IMR-90 (cell line): ENCODE measurements at regions of chr2 and their contacts with region 1.

Region 1: DNA sequence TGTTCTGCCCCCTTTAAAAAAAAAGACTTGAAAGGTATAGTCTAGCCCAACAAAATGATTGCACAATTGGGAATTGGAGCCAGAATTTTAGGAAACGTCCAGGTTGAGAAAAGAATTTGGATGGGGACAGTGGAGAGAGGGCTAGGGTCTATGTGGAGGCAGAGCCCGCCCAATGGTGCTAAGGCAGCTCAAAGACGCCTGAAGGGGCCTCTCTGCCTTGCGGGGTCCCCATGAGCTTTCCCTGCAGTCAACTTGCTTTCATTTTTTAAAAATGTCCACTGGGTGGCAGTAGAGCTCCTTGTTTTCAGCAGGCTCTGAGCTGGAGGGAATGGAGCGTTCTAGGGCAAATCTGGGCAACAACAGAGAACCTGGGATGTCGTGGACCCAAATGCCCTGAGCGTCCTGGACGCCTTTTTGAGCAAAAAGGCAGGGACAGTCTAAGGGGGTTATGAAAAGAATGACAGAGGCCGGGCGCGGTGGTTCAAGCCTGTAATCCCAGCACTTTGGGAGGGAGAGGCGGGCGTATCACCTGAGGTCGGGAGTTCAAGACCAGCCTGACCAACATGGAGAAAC is 40.2 kb upstream of the ITM2C start:
- DNase-seq: peak; percentile 81
- ATAC-seq: peak; percentile 90
- H3K4me3 ChIP-seq: peak overlapping the region; percentile 46
- H3K27ac ChIP-seq: no peak overlapping the region
- H3K4me1 ChIP-seq: no peaks in the 10 kb centered on the region
- H3K27me3 ChIP-seq: peaks cover 20% of the 10 kb centered on the region
- CTCF ChIP-seq: peak; percentile 69
- POLR2A ChIP-seq: no peak
- RAD21 ChIP-seq: peak; percentile 78

Region 2: GRCh38 chr2:230007931-230008707 is 816.4 kb before region 1 on chr2:
- CTCF ChIA-PET with region 1: no interaction called
- POLR2A ChIA-PET with region 1: no interaction called
- dilution Hi-C with region 1: no loop called
- in situ Hi-C with region 1: loop called (anchors 25 kb)
- intact Hi-C with region 1: no loop called
- DNase-seq: peak; percentile 71
- ATAC-seq: peak; percentile 52
- H3K4me3 ChIP-seq: no peak overlapping the region
- H3K27ac ChIP-seq: no peak overlapping the region
- H3K4me1 ChIP-seq: peaks cover 15% of the 10 kb centered on the region
- H3K27me3 ChIP-seq: no peaks in the 10 kb centered on the region
- CTCF ChIP-seq: peak; percentile 88
- POLR2A ChIP-seq: peak; percentile 34; the same call in 1 of the 2 replicates
- RAD21 ChIP-seq: peak; percentile 88

Region 3: DNA sequence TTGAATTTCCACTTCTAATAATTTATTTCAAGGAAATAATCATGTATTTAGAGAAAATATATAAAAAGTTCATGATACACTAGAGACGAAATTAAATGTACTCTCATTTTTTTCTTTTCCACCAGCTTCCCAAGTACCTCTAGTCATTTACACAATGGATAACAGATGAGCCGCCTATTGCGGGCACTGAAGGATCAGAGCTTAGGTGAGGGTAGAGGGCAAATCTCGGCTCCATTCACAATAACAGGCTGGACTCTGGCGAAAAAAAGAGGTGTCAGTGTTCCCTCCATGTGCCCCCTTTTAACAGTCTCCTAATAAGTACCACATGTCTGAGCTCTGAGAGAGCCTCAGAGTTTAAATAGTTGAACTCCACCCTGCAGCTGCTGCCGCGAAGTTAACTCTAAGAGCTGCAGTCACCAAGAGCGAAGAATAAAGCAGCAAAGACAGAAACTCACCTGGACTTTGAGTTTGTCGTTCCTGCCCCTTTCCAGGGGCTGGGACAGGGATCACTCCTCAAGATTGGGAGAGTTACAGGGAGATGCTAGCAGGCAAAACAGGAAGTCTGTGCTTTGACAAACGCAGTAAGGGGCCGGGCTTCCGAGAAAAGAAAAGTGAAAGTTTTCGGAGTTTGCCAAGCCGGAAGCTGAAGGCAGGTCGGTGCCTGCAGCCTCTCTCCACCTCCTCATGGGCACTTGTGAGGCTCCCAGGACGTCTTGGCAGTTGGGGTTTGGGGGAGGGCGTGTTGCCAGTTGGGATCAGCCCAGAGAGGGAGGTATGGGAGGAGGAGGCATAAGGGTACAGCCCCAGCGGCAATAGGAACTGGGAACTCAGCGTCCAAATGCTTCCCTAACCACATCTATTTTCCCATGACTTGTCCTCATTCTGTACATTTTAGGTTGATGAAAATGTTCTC is 604.8 kb before region 1 on chr2 and contains the start of gene SP110:
- CTCF ChIA-PET with region 1: no interaction called
- POLR2A ChIA-PET with region 1: no interaction called
- dilution Hi-C with region 1: no loop called
- in situ Hi-C with region 1: loop called (anchors 25 kb)
- intact Hi-C with region 1: no loop called
- DNase-seq: peak; percentile 80
- ATAC-seq: peak; percentile 93
- H3K4me3 ChIP-seq: peak within 1 kb of the TSS; percentile 94
- H3K27ac ChIP-seq: peak within 1 kb of the TSS; percentile 72
- H3K4me1 ChIP-seq: no peaks in the 10 kb centered on the region
- H3K27me3 ChIP-seq: no peaks in the 10 kb centered on the region
- CTCF ChIP-seq: no peak
- POLR2A ChIP-seq: no peak
- RAD21 ChIP-seq: peak; percentile 10; the same call in 1 of the 2 replicates
- total RNA-seq, gene SP110: 9.3 and 11.1 TPM in 2 replicates

Region 4: DNA sequence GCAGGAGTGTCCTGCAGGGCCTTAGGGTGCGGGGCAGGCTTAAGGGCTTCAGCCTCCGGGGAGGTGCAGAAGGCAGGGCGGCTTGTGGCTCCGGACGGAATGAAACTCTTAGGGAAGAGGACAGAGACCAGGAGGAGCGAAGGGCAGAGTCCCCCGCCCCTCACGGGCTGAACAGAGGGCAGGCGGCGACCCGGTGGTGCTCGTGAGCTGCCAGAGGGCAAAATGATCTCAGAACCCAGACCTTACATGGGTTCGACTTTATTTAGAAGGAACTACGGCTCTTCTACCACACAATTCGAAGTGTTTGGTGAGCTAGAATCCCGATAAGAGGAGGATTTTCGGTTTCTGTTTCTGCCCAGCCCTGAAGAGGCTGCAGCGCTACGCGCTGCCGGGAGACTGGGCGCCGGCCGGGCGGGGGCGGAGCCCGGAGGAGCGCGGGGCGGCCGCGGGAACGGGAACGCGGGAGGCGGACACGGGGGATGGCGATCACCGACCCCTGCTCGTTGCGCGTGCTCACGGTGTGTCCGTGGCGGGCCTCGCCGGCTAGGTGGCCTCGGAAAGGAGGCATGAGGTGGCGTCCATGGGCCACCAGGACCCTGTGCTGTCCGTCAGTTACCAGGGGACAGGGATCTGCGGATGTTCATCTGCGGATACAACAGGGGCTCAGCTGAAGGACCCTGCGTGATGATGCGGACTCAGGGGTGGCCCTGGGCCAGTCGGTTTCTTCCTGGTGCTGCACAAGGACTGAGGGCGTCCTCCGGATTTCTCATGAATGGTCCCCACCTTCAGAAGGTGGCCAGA is 412.7 kb before region 1 on chr2:
- CTCF ChIA-PET with region 1: no interaction called
- POLR2A ChIA-PET with region 1: no interaction called
- dilution Hi-C with region 1: no loop called
- in situ Hi-C with region 1: loop called (anchors 25 kb)
- intact Hi-C with region 1: no loop called
- DNase-seq: peak; percentile 64
- ATAC-seq: peak; percentile 86
- H3K4me3 ChIP-seq: peak overlapping the region; percentile 72
- H3K27ac ChIP-seq: peak overlapping the region; percentile 92
- H3K4me1 ChIP-seq: peaks cover 13% of the 10 kb centered on the region
- H3K27me3 ChIP-seq: no peaks in the 10 kb centered on the region
- CTCF ChIP-seq: no peak; the same call in 1 of the 2 replicates
- POLR2A ChIP-seq: peak; percentile 56; the same call in 1 of the 2 replicates
- RAD21 ChIP-seq: no peak

Region 5: GRCh38 chr2:230902180-230902899 is 77.8 kb after region 1 on chr2:
- CTCF ChIA-PET with region 1: interaction called, 4 read pairs
- POLR2A ChIA-PET with region 1: no interaction called
- dilution Hi-C with region 1: no loop called
- in situ Hi-C with region 1: no loop called
- intact Hi-C with region 1: loop called (anchors 2 kb)
- DNase-seq: peak; percentile 76
- ATAC-seq: peak; percentile 99
- H3K4me3 ChIP-seq: no peak overlapping the region
- H3K27ac ChIP-seq: no peak overlapping the region
- H3K4me1 ChIP-seq: no peaks in the 10 kb centered on the region
- H3K27me3 ChIP-seq: peaks cover 31% of the 10 kb centered on the region
- CTCF ChIP-seq: peak; percentile 95
- POLR2A ChIP-seq: no peak
- RAD21 ChIP-seq: peak; percentile 94

Region 6: GRCh38 chr2:230987137-230988020 is 162.9 kb after region 1 on chr2:
- CTCF ChIA-PET with region 1: interaction called, 12 read pairs
- POLR2A ChIA-PET with region 1: no interaction called
- dilution Hi-C with region 1: no loop called
- in situ Hi-C with region 1: no loop called
- intact Hi-C with region 1: loop called (anchors 1 kb)
- DNase-seq: peak; percentile 47
- ATAC-seq: peak; percentile 97
- H3K4me3 ChIP-seq: peak overlapping the region; percentile 18
- H3K27ac ChIP-seq: no peak overlapping the region
- H3K4me1 ChIP-seq: no peaks in the 10 kb centered on the region
- H3K27me3 ChIP-seq: peaks cover 31% of the 10 kb centered on the region
- CTCF ChIP-seq: peak; percentile 94
- POLR2A ChIP-seq: no peak
- RAD21 ChIP-seq: peak; percentile 92

Region 7: GRCh38 chr2:231052494-231053451 is 228.3 kb after region 1 on chr2:
- CTCF ChIA-PET with region 1: interaction called, 8 read pairs
- POLR2A ChIA-PET with region 1: no interaction called
- dilution Hi-C with region 1: no loop called
- in situ Hi-C with region 1: no loop called
- intact Hi-C with region 1: loop called (anchors 1 kb)
- DNase-seq: peak; percentile 77
- ATAC-seq: peak; percentile 83
- H3K4me3 ChIP-seq: peak overlapping the region; percentile 59
- H3K27ac ChIP-seq: no peak overlapping the region; the same call in 1 of the 2 replicates
- H3K4me1 ChIP-seq: no peaks in the 10 kb centered on the region
- H3K27me3 ChIP-seq: peaks cover 24% of the 10 kb centered on the region
- CTCF ChIP-seq: peak; percentile 91
- POLR2A ChIP-seq: no peak
- RAD21 ChIP-seq: peak; percentile 53